Astrocyte of the cerebellum (primary cell): ENCODE measurements at regions of chr5 and their contacts with region 1.

Region 1: GRCh38 chr5:126776497-126777256 is at the start of gene LMNB1:
- DNase-seq: peak; percentile 87
- H3K4me3 ChIP-seq: peak within 1 kb of the TSS; percentile 95
- CTCF ChIP-seq: no peak

Region 2: GRCh38 chr5:126656396-126657007 is 120.2 kb before region 1 on chr5:
- in situ Hi-C with region 1: loop called (anchors 25 kb)
- DNase-seq: peak; percentile 28
- H3K4me3 ChIP-seq: no peak overlapping the region
- CTCF ChIP-seq: peak; percentile 89

Region 3: GRCh38 chr5:126693806-126694802 is 82.6 kb before region 1 on chr5:
- in situ Hi-C with region 1: no loop called
- DNase-seq: no peak
- H3K4me3 ChIP-seq: no peak overlapping the region
- CTCF ChIP-seq: no peak

Region 4: GRCh38 chr5:126736141-126736540 is 40.5 kb before region 1 on chr5:
- in situ Hi-C with region 1: no loop called
- DNase-seq: no peak
- H3K4me3 ChIP-seq: no peak overlapping the region
- CTCF ChIP-seq: no peak